ENCODE measurements at regions of chr14 and their contacts with region 1.

Region 1: DNA sequence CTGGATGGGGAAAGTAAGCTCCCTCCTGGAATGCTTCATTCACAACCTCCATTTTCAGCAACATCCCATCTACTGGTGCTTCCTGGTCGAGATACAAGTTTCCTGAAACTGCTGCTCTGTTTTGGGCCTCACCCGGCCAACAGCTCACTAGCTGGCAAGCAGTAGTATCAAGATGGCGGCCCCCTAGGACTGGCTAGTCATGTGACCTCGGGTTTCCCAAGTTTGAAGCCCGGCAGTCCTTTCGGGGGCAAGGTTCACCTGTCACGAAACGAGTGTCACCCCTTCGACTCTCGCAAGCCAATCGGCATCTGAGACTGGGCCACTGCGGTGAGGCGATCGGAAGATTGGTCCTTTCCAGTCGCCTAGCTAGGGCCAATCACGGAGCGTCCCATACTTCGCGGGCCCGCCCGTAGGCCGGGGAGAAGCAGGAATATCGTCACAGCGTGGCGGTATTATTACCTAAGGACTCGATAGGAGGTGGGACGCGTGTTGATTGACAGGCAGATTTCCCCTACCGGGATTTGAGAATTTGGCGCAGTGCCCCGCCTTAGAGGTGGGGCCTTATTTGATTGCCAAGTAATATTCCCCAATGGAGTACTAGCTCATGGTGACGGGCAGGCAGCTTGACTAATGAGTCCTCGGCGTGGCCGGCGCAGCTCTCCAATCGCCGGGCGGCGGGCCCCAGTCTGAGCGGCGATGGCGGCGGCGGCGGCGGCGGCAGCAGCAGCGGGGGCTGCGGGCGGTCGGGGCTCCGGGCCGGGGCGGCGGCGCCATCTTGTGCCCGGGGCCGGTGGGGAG is at the start of gene PABPN1:
- DNase-seq: peak; percentile 93 to 100 (median 96)
- ATAC-seq: peak; percentile 85
- H3K4me3 ChIP-seq: peak within 1 kb of the TSS; percentile 87
- H3K4me3 Mint-ChIP-seq: peak within 1 kb of the TSS; percentile 94
- H3K27ac ChIP-seq: peak within 1 kb of the TSS; percentile 92 to 96
- H3K27ac Mint-ChIP-seq: peak within 1 kb of the TSS; percentile 92
- H3K4me1 ChIP-seq: peaks cover 29% of the 10 kb centered on the region
- H3K4me1 Mint-ChIP-seq: peaks cover 35% of the 10 kb centered on the region
- H3K27me3 ChIP-seq: no peaks in the 10 kb centered on the region
- H3K27me3 Mint-ChIP-seq: no peaks in the 10 kb centered on the region
- CTCF ChIP-seq: no peak
- total RNA-seq, gene PABPN1: 188 to 195 TPM

Region 2: GRCh38 chr14:22822571-22823098 is 498.3 kb before region 1 on chr14:
- CTCF ChIA-PET with region 1: no interaction called
- POLR2A ChIA-PET with region 1: no interaction called
- intact Hi-C with region 1: no loop called
- DNase-seq: peak; percentile 46 to 85 (median 64)
- ATAC-seq: peak; percentile 84
- H3K4me3 ChIP-seq: peak overlapping the region; percentile 44
- H3K4me3 Mint-ChIP-seq: peak overlapping the region; percentile 2
- H3K27ac ChIP-seq: no peak overlapping the region
- H3K27ac Mint-ChIP-seq: no peak overlapping the region
- H3K4me1 ChIP-seq: peaks cover 18% of the 10 kb centered on the region
- H3K4me1 Mint-ChIP-seq: peaks cover 23% of the 10 kb centered on the region
- H3K27me3 ChIP-seq: peaks cover 0 to 5% of the 10 kb centered on the region in 2 experiments
- H3K27me3 Mint-ChIP-seq: peaks cover 10% of the 10 kb centered on the region
- CTCF ChIP-seq: peak; percentile 83

Region 3: GRCh38 chr14:22929104-22929847 is 391.7 kb before region 1 on chr14 and contains the start of gene PRMT5:
- CTCF ChIA-PET with region 1: no interaction called
- POLR2A ChIA-PET with region 1: interaction called, 3 read pairs
- intact Hi-C with region 1: loop called in 1 of 2 experiments (anchors 10 kb)
- DNase-seq: peak; percentile 93 to 100 (median 97)
- ATAC-seq: peak; percentile 96
- H3K4me3 ChIP-seq: peak within 1 kb of the TSS; percentile 91
- H3K4me3 Mint-ChIP-seq: no peak within 1 kb of the TSS
- H3K27ac ChIP-seq: peak within 1 kb of the TSS; percentile 79 to 88
- H3K27ac Mint-ChIP-seq: no peak within 1 kb of the TSS
- H3K4me1 ChIP-seq: peaks cover 30% of the 10 kb centered on the region
- H3K4me1 Mint-ChIP-seq: peaks cover 11% of the 10 kb centered on the region
- H3K27me3 ChIP-seq: no peaks in the 10 kb centered on the region
- H3K27me3 Mint-ChIP-seq: no peaks in the 10 kb centered on the region
- CTCF ChIP-seq: no peak
- total RNA-seq, gene PRMT5: 15.6 to 19.3 TPM

Region 4: DNA sequence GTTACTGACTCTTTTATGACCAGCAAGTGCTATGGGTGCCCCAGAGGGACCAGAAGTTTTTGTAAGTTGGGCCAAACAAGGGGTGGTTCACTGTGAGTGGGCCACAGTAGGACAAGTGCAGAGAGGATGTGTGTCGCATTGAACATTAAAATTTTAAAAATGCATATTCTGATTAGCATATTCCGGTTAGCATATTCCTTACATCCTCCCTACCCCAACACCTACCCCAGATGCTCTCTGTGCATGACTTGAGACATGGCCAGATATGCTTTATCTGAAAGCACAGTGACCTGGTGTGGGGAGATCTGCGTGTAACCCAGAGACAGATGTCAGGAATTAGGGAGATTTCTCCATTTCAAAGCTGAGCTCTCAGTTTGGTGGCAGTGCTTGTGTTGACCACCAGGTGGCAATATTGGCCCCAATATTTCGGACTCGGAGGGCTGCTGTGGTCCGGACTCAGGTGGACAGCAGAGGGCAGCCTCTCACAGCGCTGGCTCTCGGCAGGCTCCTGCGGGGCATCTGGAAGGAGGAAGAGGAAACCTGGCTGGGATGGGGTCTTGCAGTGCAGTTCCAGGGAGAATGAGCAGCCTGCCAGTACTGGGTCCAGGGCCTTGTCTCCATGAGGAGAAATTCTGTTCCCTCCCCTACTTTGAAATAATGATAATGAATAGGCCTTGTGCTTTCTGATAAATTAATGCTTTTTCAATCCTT is 200.3 kb before region 1 on chr14:
- CTCF ChIA-PET with region 1: interaction called, 5 read pairs
- POLR2A ChIA-PET with region 1: interaction called, 26 read pairs
- intact Hi-C with region 1: no loop called
- DNase-seq: peak; percentile 63 to 91 (median 72)
- ATAC-seq: peak; percentile 61
- H3K4me3 ChIP-seq: no peak overlapping the region
- H3K4me3 Mint-ChIP-seq: peak overlapping the region; percentile 80
- H3K27ac ChIP-seq: peak overlapping the region; percentile 51 to 55
- H3K27ac Mint-ChIP-seq: peak overlapping the region; percentile 94
- H3K4me1 ChIP-seq: peaks cover 54% of the 10 kb centered on the region
- H3K4me1 Mint-ChIP-seq: peaks cover 61% of the 10 kb centered on the region
- H3K27me3 ChIP-seq: no peaks in the 10 kb centered on the region
- H3K27me3 Mint-ChIP-seq: no peaks in the 10 kb centered on the region
- CTCF ChIP-seq: peak; percentile 99

Region 5: DNA sequence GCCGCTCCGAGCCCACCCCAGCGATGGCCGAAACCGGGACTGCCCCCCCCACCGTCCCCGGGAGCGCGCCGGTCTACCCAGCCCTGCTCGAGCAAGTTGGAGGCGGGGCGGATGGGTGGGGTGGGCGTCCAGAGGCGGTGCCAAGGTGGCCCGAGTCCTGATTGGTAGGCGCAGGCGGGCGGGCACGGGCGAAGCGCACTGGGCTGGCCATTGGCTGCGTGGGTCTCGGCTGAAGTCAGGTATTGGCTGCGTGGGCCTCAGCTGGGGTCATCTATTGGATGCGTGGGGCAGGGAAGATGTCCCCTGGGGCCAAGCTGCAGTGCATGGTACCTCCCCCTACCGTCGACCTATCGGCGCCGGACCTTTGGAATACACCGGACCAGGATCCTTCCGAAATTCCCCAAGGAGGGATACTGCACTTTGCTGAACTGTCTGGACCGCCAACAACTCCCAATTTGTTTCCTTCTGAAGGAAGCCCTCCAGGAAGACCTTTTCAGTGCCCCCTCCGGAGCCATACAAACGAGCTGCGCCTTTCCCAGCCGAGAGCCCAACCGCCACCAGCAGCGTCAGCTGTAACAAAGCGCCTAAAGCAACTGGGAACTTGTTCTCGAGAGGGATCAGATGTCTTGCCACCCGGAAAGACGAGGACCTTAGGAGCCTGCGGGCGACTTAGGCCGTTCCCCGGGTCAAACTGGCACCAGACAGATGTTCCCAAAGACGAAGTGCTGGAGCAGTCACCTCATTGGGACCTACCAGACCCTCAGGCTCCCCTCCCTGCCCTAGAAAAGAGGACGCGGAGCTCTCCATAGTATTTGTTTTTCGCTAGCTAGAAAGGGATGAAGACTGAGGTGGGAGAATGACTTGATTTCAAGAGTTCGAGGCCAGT is 34.7 kb before region 1 on chr14 and contains the start of gene HOMEZ:
- CTCF ChIA-PET with region 1: interaction called, 4 read pairs
- POLR2A ChIA-PET with region 1: interaction called, 60 read pairs
- intact Hi-C with region 1: loop called (anchors 5 kb)
- DNase-seq: peak; percentile 94 to 98 (median 97)
- ATAC-seq: peak; percentile 97
- H3K4me3 ChIP-seq: peak within 1 kb of the TSS; percentile 81
- H3K4me3 Mint-ChIP-seq: peak within 1 kb of the TSS; percentile 95
- H3K27ac ChIP-seq: peak within 1 kb of the TSS; percentile 79 to 81
- H3K27ac Mint-ChIP-seq: peak within 1 kb of the TSS; percentile 94
- H3K4me1 ChIP-seq: peaks cover 17% of the 10 kb centered on the region
- H3K4me1 Mint-ChIP-seq: peaks cover 32% of the 10 kb centered on the region
- H3K27me3 ChIP-seq: no peaks in the 10 kb centered on the region
- H3K27me3 Mint-ChIP-seq: no peaks in the 10 kb centered on the region
- CTCF ChIP-seq: no peak
- total RNA-seq, gene HOMEZ: 2.0 to 2.8 TPM

Region 6: DNA sequence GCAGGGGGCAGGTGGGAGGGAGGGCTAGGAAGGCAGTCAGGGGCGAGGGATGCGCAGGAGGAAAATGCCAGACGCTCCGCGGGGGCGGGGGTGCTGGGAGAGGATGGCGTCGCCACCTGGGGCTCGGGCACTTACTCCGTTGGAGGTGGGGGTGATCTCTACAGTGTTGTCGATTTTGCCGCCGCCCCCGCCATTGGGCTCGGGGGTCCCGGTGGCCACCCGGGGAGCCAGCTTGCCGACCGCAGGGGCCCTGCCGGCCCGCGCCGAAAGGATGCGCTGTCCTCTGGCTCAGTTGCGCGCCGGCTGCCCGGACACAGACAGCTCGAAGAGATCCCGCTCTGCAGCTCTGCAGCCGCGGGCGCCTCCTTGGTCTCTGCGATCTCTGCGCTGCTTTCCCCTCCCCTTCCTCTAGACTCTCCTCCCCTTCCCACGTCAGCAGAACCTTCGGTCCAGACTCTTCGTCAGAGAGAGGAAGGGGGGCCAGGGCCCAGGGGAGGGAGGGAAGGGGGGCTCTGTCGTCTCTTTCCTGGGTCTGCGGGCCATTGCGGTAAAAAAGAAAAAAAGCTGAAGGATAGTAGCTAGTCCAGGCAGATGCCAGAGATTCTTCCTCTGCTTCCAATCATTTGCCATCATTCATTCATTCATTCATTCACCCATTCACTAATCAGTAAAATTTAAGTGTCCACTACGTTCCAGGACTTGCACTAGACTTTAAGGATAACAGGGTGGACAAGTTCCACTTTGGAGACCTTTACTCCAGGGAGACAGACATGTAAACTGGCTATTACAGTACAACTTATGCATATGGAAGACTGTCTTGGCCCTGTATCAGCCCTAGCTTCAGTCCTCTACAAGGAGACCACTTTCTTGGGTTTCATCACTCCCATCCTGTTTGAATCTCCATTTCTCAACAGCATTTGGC is 31.8 kb after region 1 on chr14 and contains the start of gene SLC22A17:
- CTCF ChIA-PET with region 1: no interaction called
- POLR2A ChIA-PET with region 1: interaction called, 21 read pairs
- intact Hi-C with region 1: no loop called
- DNase-seq: peak; percentile 23 to 86 (median 61)
- ATAC-seq: peak; percentile 95
- H3K4me3 ChIP-seq: peak within 1 kb of the TSS; percentile 59
- H3K4me3 Mint-ChIP-seq: peak within 1 kb of the TSS; percentile 86
- H3K27ac ChIP-seq: no peak within 1 kb of the TSS
- H3K27ac Mint-ChIP-seq: peak within 1 kb of the TSS; percentile 26
- H3K4me1 ChIP-seq: peaks cover 15% of the 10 kb centered on the region
- H3K4me1 Mint-ChIP-seq: peaks cover 5% of the 10 kb centered on the region
- H3K27me3 ChIP-seq: peaks cover 4 to 21% of the 10 kb centered on the region in 2 experiments
- H3K27me3 Mint-ChIP-seq: peaks cover 48% of the 10 kb centered on the region
- CTCF ChIP-seq: no peak
- total RNA-seq, gene SLC22A17: 19.5 to 21.1 TPM

Region 7: DNA sequence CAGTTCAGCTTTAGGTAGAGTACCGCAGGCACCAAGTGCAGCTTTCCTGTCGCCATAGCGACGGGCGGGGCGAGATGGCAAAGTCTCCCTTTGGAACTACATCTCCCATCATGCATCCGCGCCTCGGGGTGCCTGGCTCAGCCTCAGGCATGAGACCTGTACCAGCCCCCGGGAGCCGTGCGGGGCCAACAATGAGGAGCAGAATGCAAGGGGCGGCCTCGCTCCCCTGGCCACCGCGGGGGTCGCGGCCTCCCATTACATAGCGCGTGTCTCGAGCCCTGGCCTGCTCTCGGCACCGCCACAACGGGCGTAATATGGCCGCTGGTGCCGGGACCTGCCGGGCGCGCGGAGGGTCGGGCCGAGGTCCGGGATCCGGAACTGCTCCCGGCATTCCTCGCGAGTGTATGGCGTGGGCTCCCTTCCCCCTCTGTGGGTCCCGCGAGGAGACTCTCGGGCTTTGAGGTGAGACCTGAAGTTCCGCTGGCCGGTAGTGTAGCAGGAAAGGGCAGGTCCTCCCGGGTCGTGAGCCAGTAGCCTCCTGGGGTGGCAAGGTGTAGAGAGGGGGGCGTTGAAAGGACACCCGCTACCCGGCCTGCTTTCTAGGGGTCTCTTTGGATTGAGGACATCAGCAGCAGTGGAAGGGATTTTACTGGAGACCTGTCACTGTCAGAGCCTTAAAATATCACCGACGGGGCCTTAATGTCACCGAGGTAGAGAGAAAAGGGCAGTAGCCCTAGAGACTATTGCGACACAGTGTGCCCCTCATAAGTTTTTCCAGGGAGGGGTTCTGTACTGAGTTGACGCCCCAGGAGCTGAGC is 235.1 kb after region 1 on chr14 and contains the start of gene THTPA:
- CTCF ChIA-PET with region 1: no interaction called
- POLR2A ChIA-PET with region 1: interaction called, 4 read pairs
- intact Hi-C with region 1: loop called (anchors 5 kb)
- DNase-seq: peak; percentile 86 to 96 (median 91)
- ATAC-seq: peak; percentile 91
- H3K4me3 ChIP-seq: peak within 1 kb of the TSS; percentile 94
- H3K4me3 Mint-ChIP-seq: peak within 1 kb of the TSS; percentile 99
- H3K27ac ChIP-seq: peak within 1 kb of the TSS; percentile 87 to 89
- H3K27ac Mint-ChIP-seq: peak within 1 kb of the TSS; percentile 79
- H3K4me1 ChIP-seq: peaks cover 40% of the 10 kb centered on the region
- H3K4me1 Mint-ChIP-seq: peaks cover 42% of the 10 kb centered on the region
- H3K27me3 ChIP-seq: peaks cover 0 to 1% of the 10 kb centered on the region in 2 experiments
- H3K27me3 Mint-ChIP-seq: peaks cover 9% of the 10 kb centered on the region
- CTCF ChIP-seq: no peak
- total RNA-seq, gene THTPA: 13.0 to 13.4 TPM

Measured in CD4-positive, alpha-beta T cell (primary cell).